ENCODE measurements at regions of chr20 and their contacts with region 1.

Region 1: GRCh38 chr20:5039255-5039657 is 37.9 kb upstream of the SLC23A2 start:
- DNase-seq: no peak
- H3K27ac ChIP-seq: no peak overlapping the region
- CTCF ChIP-seq: no peak

Region 2: DNA sequence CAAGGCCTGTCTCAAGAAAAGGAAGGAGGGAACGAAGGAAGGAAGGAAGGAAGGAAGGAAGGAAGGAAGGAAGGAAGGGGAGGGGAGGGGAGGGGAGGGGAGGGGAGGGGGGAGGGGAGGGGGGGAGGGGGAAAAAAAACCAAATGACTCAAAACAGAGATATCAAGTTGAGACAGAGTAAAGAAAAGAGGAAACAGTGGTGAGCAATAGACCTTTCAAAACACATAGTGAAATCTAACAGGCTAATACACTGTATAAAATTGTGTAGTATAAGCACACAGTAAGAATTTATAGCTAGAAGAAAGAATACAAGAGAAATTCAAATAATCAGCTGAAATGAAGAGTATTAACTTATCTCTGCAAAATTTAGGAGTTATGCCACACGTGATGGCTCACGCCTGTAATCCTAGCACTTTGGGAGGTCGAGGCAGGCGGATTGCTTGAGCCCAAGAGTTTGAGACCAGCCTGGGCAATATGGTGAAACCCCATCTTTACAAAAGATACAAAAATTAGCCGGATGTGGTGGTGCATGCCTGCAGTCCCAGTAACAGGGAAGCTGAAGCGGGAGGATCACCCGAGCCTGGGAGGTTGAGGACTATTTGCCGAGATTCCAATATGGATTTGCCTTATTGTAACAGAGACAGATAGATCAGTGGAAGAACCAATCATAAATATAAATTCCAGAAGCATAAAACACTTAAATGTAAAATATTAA is 194.3 kb before region 1 on chr20:
- CTCF ChIA-PET with region 1: no interaction called
- POLR2A ChIA-PET with region 1: interaction called, 11 read pairs
- DNase-seq: no peak
- H3K27ac ChIP-seq: no peak overlapping the region
- CTCF ChIP-seq: no peak

Region 3: DNA sequence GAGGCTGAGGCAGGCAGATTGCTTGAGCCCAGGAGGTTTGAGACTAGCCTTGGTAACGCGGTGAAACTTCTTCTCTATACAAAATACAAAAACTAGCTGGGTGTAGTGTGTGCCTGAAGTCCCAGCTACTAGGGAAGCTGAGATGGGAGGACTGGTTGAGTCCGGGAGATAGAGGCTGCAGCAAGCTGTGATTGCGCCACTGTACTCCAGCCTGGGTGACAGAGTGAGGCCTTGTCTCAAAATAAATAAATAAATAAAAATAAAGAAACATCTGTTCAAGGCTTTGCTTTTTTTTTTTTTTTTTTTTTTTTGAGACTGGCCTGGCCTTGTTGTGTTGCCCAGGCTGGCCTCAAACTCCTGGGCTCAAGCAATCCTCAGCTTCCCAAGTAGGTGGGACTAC is 14.3 kb before region 1 on chr20:
- CTCF ChIA-PET with region 1: no interaction called
- POLR2A ChIA-PET with region 1: no interaction called
- DNase-seq: no peak
- H3K27ac ChIP-seq: no peak overlapping the region
- CTCF ChIP-seq: no peak

Measured in RWPE1 (cell line).